ENCODE measurements at regions of chr20 and their contacts with region 1.

Region 1: DNA sequence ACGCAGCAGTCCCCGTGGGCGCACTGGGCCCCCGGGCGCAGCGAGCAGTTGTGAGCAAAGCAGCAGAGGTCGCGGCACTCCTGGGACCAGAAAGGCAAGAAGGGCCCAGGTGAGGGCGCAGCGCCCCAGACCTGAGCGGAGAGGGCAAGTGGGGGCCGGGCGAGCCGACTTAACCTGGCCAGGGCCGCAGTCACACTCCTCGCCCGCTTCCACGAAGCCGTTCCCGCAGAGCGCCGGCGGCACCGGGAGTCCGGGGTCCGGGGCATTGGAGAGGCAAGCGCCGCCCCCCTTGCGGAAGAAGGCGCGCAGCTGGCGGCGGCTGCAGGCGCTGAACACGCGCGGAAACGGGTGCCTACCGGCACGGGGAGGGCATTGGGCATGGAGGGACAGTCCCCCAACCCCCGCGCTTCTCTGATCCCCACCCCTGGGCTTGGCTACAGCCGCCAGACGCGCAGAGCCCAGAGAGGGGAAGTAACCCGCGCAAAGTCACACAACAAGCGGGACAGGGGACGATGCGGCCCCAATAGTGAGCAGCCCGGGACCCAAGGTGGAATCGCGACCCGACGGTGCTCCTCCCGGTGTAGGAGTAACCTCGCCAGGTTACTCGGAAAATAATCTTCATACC is 9.2 kb downstream of the ADAM33 start:
- DNase-seq: no peak
- H3K27ac ChIP-seq: no peak overlapping the region
- CTCF ChIP-seq: no peak

Region 2: DNA sequence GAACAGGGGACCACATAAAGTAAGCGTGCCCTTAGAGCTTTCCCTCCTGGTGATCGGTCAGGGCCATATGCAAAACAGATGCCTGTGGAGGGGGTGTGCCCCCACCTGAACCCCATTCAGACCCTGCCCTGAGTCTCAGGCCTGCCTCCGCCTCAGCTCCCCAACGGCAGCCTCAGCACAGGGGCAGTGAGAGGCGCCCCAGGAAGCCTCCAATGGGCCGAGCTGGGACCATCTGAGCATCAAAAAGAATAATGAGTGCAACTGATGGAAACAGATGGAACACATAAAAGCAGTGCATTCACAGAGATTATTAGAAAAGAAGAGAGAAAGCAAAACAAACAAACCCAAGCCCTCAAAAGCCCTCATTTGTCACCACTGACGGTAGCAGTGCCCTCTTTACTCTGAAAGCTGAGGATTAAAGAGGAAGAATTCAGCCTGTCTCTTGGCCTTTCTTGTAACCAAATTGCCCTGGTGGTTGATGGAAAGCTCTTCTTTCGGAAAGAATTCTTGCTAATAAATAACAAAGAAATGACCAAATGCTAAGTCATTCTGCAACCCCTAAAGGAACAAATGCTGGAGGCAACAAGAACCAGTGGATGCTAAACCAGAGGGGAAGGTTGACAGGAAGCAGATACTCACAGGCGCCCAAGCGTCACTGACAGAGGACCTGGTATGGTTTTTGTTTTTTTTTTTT is 88.1 kb after region 1 on chr20:
- CTCF ChIA-PET with region 1: no interaction called
- POLR2A ChIA-PET with region 1: no interaction called
- DNase-seq: no peak
- H3K27ac ChIP-seq: no peak overlapping the region
- CTCF ChIP-seq: no peak

Region 3: DNA sequence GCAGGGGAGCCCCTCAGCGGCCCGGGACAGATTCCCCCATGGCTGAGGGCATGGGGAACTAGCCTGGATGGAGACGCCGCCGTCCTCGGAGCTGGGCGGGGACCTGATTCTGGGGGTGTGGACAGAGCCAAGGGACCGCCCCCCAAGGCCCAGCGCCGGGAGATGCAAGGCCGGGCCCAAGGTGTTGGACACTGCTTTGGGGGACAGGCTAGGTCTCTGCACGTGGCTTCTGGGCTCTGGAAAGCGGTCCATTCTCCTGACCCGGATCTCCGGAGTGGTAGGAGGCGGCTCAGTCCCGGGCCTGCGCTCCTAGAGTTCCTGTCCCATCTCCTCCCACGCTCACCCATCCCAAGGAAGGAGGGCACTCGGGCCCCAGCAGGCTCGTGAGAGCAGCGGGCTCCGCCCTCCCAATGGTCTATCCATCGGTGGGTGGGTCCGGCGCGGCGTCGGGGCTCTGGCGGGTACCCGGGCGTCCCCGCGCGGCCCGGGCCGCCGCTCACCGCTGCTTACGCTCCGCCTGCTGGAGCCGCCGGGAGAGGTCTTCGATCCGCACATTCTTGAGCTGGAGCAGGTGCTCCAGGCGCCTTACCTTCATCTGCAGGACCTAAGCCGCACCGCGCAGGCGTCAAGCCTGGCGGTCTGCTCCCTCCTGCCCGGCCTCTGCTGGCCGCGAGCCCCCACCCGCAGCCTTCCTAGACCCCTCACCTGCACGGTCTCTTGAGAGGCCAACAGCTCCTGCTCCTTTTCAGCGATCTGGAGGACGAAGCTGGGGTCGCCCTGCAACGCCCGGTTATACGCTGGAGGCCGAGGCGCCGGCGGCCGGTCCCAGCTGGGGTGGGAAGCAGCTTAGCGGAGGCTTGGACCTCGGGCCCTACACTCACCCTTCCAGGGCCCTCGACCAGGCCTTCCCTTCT is 105.3 kb after region 1 on chr20:
- CTCF ChIA-PET with region 1: interaction called, 18 read pairs
- POLR2A ChIA-PET with region 1: no interaction called
- DNase-seq: peak; percentile 63
- H3K27ac ChIP-seq: peak overlapping the region; percentile 3; the same call in 1 of the 2 replicates
- CTCF ChIP-seq: no peak